ENCODE measurements at regions of chr9 and their contacts with region 1.

Region 1: GRCh38 chr9:136757328-136757727 is 715 bp downstream of the LCN8 start:
- DNase-seq: no peak
- CTCF ChIP-seq: no peak

Region 2: GRCh38 chr9:136742591-136743391 is 14.5 kb before region 1 on chr9 and contains the start of gene LCN10:
- CTCF ChIA-PET with region 1: interaction called, 24 read pairs
- POLR2A ChIA-PET with region 1: no interaction called
- DNase-seq: no peak
- CTCF ChIP-seq: no peak

Region 3: GRCh38 chr9:136784249-136784996 is 27.1 kb after region 1 on chr9:
- CTCF ChIA-PET with region 1: interaction called, 17 read pairs
- POLR2A ChIA-PET with region 1: no interaction called
- DNase-seq: no peak
- CTCF ChIP-seq: peak; percentile 5